ENCODE measurements at regions of chr16 and their contacts with region 1.

Region 1: DNA sequence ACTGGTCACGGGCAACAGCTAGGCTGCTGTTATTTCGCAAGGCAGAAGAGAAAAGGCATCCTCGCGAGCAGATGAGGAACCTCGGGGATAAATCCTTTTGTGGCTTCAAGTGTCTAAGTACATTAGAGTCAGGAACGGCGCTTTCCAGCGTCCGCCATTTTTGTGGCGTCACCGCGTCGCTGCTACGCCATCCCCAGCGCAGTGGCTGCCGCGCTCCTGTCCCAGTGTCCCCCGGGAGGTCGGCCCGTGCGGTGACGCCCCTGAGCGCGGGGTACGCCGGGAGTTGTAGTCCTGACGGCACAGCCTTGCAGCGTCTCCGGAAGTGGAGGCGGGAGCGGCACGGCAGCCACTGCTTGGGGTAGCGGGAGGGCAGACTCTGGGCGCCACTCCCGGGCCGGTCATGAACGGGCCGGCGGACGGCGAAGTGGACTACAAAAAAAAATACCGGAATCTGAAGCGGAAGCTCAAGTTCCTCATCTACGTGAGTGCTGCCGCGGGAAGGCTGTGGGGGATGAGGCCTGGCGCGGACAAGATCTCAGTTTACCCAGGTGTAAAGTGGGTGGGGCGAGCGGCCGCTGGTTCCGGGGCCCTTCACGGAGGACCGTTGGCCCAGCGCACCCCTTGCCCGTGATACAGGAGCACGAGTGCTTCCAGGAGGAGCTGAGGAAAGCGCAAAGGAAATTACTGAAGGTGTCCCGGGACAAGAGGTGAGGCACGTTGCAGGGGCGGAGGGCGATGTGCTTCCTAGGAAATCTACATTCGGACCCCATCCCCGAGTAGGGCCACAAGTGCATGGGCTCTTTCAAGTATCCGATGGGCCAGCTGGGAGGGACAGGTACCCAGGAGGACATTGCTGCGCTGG is at the start of gene INO80E:
- DNase-seq: peak; percentile 100
- ATAC-seq: peak; percentile 96
- H3K4me3 Mint-ChIP-seq: peak within 1 kb of the TSS; percentile 98
- H3K27ac Mint-ChIP-seq: peak within 1 kb of the TSS; percentile 97
- H3K4me1 Mint-ChIP-seq: peaks cover 29% of the 10 kb centered on the region
- H3K27me3 Mint-ChIP-seq: no peaks in the 10 kb centered on the region
- CTCF ChIP-seq: no peak
- total RNA-seq, gene INO80E: 83.5 and 93.6 TPM in 2 replicates

Region 2: DNA sequence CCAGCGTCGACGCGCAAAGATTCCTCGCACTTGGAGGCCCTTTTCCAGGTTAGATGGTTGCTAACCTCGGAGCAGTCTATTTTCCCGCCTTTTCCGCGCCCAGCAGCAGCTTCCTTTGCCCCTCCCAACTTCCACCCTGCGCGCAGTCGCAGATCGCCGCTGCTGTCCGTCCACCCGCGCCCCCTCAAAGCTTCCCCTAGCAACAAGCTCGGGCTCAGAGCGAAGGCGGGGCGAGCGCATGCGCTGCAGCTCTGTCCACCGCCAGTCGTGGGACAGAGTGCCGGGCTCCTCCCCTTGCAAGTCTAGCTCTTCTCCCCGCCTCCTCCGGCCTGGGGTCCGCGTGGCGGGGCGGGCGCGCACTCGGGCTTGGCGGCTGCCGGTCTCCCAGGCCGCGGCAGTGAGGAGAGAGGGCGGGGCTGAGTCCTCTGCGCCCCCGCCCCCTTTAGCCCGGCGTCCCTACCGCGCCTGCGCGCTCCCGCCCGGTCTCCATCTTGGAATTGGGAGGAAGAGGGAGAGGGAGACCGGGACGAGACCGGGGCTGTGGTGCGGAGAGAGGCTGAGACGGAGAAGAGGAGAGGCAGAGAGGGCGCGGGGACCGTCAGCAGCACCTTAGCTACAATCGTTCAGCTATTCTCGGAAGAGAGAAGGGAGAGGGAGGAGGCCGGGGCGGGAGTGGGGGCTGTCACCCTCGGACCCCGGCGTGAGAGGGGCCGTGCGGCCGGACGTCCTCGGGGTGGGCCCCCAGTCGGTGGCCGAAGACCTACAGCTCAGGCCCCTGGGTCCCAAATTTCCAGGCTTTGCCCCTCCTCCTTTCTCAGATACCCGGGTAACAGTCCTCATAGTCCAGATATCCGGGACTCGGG is 22.5 kb before region 1 on chr16 and contains the start of gene TAOK2:
- CTCF ChIA-PET with region 1: no interaction called
- POLR2A ChIA-PET with region 1: interaction called, 9 read pairs
- intact Hi-C with region 1: loop called (anchors 1 kb)
- DNase-seq: peak; percentile 95
- ATAC-seq: peak; percentile 99
- H3K4me3 Mint-ChIP-seq: peak within 1 kb of the TSS; percentile 96
- H3K27ac Mint-ChIP-seq: peak within 1 kb of the TSS; percentile 90
- H3K4me1 Mint-ChIP-seq: peaks cover 39% of the 10 kb centered on the region
- H3K27me3 Mint-ChIP-seq: no peaks in the 10 kb centered on the region
- CTCF ChIP-seq: no peak
- total RNA-seq, gene TAOK2: 30.5 and 36.1 TPM in 2 replicates

Region 3: GRCh38 chr16:29983420-29984136 is 12.6 kb before region 1 on chr16:
- CTCF ChIA-PET with region 1: no interaction called
- POLR2A ChIA-PET with region 1: interaction called, 12 read pairs
- intact Hi-C with region 1: no loop called
- DNase-seq: no peak
- ATAC-seq: no peak
- H3K4me3 Mint-ChIP-seq: no peak overlapping the region
- H3K27ac Mint-ChIP-seq: no peak overlapping the region
- H3K4me1 Mint-ChIP-seq: no peaks in the 10 kb centered on the region
- H3K27me3 Mint-ChIP-seq: no peaks in the 10 kb centered on the region
- CTCF ChIP-seq: no peak

Measured in activated B cell treated with CpG ODN at 0.5 μM for 24 hours (primary cell).